Gastrocnemius medialis (tissue), 4 donors: ENCODE measurements at regions of chr5 and their contacts with region 1.

Region 1: DNA sequence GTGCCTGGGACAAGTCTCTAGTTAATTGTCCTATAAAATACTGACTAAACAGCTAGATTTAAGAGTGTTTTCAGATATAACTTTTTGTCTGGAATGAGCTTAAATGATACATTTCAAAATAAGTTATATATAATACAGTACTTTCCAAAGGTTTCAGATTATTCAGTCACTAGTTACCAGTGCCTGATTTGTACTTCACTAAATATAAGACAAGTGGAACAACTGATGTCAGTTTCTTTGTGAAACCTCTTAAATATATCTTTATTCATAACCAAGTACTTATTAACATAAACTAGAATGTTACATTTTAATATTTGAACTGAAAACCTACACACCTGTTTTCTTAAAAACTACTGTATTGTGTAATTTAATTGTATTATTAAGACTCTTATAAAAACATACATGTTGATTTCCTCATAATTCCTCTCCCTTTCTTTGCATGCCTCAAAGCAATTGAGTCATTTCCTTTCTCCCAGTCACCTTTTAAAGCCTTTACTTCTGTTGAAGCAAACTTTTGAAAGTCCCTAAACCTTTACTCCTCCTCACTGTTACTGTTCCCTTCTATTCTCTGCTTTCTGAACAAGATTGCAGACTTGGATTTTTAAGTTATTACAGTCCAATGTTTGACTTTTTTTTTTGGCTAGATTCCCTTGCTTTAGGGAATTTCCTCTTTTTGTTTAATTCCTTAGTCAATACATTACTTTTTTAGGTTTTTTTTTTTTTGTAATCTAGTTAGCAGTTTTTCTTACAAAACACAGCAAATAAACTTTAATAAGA is 8.7 kb upstream of the SEMA6A start:
- DNase-seq: no peak
- ATAC-seq: no peak
- H3K4me3 ChIP-seq: no peak overlapping the region
- H3K27ac ChIP-seq: no peak overlapping the region
- H3K4me1 ChIP-seq: no peaks in the 10 kb centered on the region
- H3K27me3 ChIP-seq: no peaks in the 10 kb centered on the region
- CTCF ChIP-seq: no peak
- POLR2A ChIP-seq: no peak

Region 2: DNA sequence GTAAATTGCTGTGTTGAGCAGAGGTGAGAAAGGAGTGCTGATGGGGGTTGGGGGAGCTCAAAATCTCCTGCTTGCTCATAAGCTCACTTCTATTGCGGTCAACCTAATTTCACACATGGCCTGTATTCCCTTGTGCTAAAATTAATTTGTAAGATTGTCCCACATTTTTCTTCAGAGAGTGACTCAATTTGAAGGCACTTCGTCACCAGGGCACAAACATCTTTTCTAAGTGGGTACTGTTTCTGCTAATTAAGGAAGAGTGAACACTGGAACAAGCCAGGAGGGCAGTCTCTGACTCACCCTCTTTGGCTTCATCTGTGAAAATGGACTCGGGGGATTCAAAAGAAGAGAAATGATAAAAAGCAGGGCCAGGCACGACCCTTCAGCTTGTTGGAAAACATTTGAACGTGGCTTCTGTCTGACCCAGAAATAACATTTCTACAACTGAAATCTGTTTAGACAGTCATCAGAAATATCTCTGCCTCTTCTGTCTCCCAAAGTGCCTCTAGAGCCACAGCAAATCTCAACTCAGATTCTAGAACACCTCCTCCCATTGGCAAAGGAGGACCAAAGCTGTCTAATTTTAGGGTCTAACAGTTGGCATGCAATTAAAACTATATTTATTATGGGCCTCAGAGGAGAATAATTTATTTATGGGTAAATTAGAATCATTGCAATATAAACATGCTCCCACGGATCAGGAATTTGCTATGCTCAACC is 1088.5 kb before region 1 on chr5:
- in situ Hi-C with region 1: no loop called
- intact Hi-C with region 1: no loop called
- DNase-seq: no peak
- ATAC-seq: peak in 1 of 2 donors; percentile 57
- H3K4me3 ChIP-seq: no peak overlapping the region
- H3K27ac ChIP-seq: no peak overlapping the region
- H3K4me1 ChIP-seq: no peaks in the 10 kb centered on the region
- H3K27me3 ChIP-seq: no peaks in the 10 kb centered on the region
- CTCF ChIP-seq: no peak
- POLR2A ChIP-seq: no peak

Region 3: DNA sequence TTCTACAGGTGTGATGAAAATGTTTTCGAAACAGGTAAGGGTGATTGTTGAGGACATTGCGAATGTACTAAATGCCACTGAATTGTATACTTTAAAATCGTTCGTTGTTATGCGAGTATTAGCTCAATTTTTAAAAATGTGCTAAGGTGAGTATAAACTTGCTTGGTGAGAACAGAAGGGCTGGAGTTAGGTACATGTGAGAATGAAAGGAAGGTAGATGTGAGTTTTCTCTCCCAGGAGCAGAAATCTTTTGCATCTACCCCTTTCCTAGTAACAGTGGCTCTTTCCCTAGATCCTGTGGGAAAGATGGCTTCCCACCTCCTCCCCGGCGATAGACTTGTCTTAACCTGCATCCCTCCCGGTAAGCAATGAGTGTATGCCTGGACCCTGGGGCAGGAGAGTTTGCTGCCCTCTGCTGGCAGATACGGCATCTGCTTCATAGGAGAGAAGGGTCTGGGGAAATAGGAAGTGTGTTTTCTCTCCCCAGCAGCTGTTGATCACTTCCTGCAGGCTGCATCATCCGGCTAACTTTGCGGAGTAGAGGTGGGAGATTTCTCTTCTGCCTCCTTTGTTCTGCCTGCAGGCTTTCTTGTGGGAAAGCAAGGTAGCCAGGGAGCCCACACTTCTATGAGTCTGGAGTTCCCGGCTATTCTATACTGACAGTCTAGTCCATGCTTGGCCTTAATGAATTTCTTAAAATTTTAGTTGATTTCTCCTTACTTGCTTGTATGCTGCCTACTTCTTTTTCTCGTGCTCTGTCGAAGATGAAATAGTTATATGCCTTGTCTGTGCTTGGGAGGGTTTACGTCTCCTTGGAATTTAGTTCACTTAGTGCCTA is 364.6 kb after region 1 on chr5:
- in situ Hi-C with region 1: loop called in 1 of 4 experiments (anchors 10 kb)
- intact Hi-C with region 1: no loop called
- DNase-seq: no peak
- ATAC-seq: no peak
- H3K4me3 ChIP-seq: no peak overlapping the region
- H3K27ac ChIP-seq: no peak overlapping the region
- H3K4me1 ChIP-seq: no peaks in the 10 kb centered on the region
- H3K27me3 ChIP-seq: no peaks in the 10 kb centered on the region
- CTCF ChIP-seq: peak in 4 of 5 experiments; percentile 36 to 59 (median 44)
- POLR2A ChIP-seq: no peak